Left lung (tissue), 14 donors: ENCODE measurements at regions of chr22 and their contacts with region 1.

Region 1: DNA sequence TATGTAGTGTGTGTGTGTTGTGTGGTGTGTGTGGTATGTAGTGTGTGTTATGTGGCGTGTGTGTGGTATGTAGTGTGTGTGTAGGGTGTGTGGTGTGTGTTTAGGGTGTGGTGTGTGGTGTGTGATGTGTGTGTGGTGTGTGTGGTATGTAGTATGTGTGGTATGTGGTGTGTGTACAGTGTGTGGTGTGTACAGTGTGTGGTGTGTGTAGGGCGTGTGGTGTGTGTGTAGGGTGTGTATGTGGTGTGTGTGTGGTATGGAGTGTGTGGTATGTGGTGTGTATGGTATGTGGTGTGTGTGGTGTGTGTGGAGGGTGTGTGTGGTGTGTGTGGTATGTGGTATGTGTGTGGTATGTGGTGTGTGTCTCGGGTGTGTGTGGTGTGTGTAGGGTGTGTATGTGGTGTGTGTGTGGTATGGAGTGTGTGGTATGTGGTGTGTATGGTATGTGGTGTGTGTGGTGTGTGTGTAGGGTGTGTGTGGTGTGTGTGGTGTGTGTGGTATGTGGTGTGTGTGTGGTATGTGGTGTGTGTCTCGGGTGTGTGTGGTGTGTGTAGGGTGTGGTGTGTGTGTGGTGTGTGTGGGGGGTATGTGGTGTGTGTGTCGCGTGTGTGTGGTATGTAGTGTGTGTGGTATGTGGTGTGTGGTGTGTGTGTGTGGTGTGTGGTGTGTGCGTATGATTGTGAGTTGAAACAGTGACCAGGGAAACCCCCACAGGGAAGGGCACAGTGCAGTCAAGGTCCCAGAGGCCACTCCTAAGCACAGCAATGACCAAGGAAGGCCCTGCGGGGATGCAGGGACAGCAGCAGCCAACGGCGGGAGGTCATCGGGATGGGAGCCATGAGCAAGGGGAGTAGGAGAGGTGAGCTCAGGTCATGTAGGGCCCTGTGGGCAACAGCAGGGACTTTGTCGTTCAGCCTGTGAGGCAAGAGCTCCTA is 2.9 kb upstream of the PPP6R2 start:
- DNase-seq: no peak
- ATAC-seq: no peak
- H3K4me3 ChIP-seq: no peak overlapping the region
- H3K27ac ChIP-seq: no peak overlapping the region
- H3K4me1 ChIP-seq: peaks cover 8 to 12% of the 10 kb centered on the region in 2 donors
- H3K27me3 ChIP-seq: no peaks in the 10 kb centered on the region
- CTCF ChIP-seq: no peak

Region 2: GRCh38 chr22:50258361-50259292 is 81.6 kb before region 1 on chr22:
- intact Hi-C with region 1: loop called in 1 of 2 experiments (anchors 5 kb)
- DNase-seq: no peak
- ATAC-seq: no peak
- H3K4me3 ChIP-seq: no peak overlapping the region
- H3K27ac ChIP-seq: no peak overlapping the region
- H3K4me1 ChIP-seq: peaks cover 0 to 26% of the 10 kb centered on the region in 2 donors
- H3K27me3 ChIP-seq: peaks cover 0 to 49% of the 10 kb centered on the region in 2 donors
- CTCF ChIP-seq: no peak

Region 3: GRCh38 chr22:50276143-50276542 is 64.1 kb before region 1 on chr22:
- intact Hi-C with region 1: no loop called
- DNase-seq: peak in 3 of 4 donors; percentile 44 to 91 (median 77)
- ATAC-seq: peak; percentile 88
- H3K4me3 ChIP-seq: no peak overlapping the region
- H3K27ac ChIP-seq: no peak overlapping the region
- H3K4me1 ChIP-seq: peaks cover 11% of the 10 kb centered on the region in 2 donors
- H3K27me3 ChIP-seq: peaks cover 0 to 17% of the 10 kb centered on the region in 2 donors
- CTCF ChIP-seq: peak; percentile 59 to 70

Region 4: GRCh38 chr22:50286275-50286674 is 53.9 kb before region 1 on chr22:
- intact Hi-C with region 1: no loop called
- DNase-seq: no peak
- ATAC-seq: no peak
- H3K4me3 ChIP-seq: no peak overlapping the region
- H3K27ac ChIP-seq: no peak overlapping the region
- H3K4me1 ChIP-seq: no peaks in the 10 kb centered on the region
- H3K27me3 ChIP-seq: no peaks in the 10 kb centered on the region
- CTCF ChIP-seq: no peak

Region 5: GRCh38 chr22:50627642-50628542 is 287.7 kb after region 1 on chr22 and contains the start of gene ARSA:
- intact Hi-C with region 1: no loop called
- DNase-seq: peak; percentile 78 to 95 (median 89)
- ATAC-seq: peak; percentile 95
- H3K4me3 ChIP-seq: peak within 1 kb of the TSS; percentile 71 to 81
- H3K27ac ChIP-seq: peak within 1 kb of the TSS; percentile 67 to 85
- H3K4me1 ChIP-seq: peaks cover 0 to 28% of the 10 kb centered on the region in 2 donors
- H3K27me3 ChIP-seq: no peaks in the 10 kb centered on the region
- CTCF ChIP-seq: peak in 1 of 2 donors; percentile 35
- polyA plus RNA-seq, gene ARSA: 17.8 to 26.2 (median 19.1) TPM